ENCODE measurements at regions of chr20 and their contacts with region 1.

Region 1: DNA sequence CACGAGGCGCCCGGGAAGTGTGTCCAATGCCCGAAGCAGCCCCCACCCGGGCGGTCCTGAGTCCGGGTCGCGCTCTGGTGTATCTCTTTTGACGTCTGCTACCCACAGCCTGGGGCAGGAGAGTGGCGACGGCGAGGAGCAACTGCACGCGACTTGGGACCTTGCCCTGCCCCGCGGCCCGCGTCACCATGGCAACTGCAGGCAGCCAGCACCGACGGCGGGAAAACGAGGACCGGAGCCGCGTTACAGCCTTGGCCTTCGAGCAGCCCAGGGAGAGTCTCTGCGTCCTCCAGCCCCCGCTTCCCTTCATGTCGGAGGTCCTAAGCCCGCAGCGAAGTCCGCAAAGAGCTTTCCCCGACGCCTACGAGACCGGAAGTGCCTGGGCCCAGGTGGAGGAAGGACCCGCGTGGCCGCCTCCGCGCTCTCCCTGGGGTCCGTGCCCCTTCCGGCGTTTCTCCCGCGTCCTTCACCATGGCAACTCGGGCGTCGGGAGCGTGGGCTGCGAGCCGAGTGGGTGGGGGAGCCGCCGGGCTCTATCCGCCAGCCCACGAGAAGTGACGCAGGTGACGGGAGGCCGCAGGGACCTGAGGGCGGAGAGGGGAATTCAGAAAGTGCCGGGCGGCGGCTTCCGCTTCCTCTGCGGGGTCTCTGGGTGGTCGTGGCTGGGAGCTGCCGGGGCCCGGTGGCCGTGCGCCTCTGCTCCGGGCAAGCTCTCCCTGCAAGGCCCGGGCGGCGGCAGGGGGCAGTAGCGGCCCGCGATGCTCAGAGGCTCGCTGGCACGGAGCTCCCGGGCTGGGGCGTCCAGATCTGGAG is 88.6 kb upstream of the TGM3 start:
- DNase-seq: peak; percentile 84

Region 2: GRCh38 chr20:2335096-2335870 is 128.1 kb after region 1 on chr20:
- CTCF ChIA-PET with region 1: no interaction called
- POLR2A ChIA-PET with region 1: no interaction called
- DNase-seq: no peak

Region 3: GRCh38 chr20:2451939-2452732 is 245.0 kb after region 1 on chr20:
- CTCF ChIA-PET with region 1: interaction called, 13 read pairs
- POLR2A ChIA-PET with region 1: no interaction called
- DNase-seq: peak; percentile 76